ENCODE measurements at regions of chr9 and their contacts with region 1.

Region 1: GRCh38 chr9:21605489-21605931 is 123.4 kb upstream of the IFNE start:
- DNase-seq: no peak
- ATAC-seq: peak in 1 of 8 donors; percentile 35
- H3K4me3 ChIP-seq: no peak overlapping the region
- H3K27ac ChIP-seq: peak overlapping the region in 1 of 10 donors; percentile 76
- H3K4me1 ChIP-seq: no peaks in the 10 kb centered on the region
- H3K27me3 ChIP-seq: peaks cover 0 to 10% (median 4%) of the 10 kb centered on the region in 7 donors
- CTCF ChIP-seq: no peak

Region 2: DNA sequence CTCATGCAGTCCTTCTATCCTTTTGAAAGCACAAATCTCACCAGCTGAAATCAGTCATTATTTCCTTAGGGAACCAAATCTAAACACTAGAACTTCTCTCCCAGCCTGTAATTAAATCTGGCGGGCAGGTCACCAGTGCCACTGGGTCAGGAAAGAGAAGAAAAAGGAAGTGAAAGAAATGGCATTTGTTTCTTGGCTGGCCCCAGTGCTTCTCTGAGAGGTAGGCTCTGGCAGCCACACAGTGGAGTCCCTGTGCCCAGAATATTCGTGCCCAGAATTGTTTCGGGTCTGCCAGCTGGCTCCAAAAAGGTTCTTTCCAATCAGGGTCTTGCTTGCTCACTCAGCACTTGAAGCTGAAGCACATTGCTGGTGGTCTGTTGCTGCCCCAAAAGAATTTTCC is 63.0 kb after region 1 on chr9:
- intact Hi-C with region 1: loop called in 1 of 10 experiments (anchors 10 kb)
- DNase-seq: no peak
- ATAC-seq: no peak
- H3K4me3 ChIP-seq: no peak overlapping the region
- H3K27ac ChIP-seq: no peak overlapping the region
- H3K4me1 ChIP-seq: no peaks in the 10 kb centered on the region
- H3K27me3 ChIP-seq: no peaks in the 10 kb centered on the region
- CTCF ChIP-seq: no peak

Region 3: GRCh38 chr9:21933865-21934264 is 328.4 kb after region 1 on chr9:
- intact Hi-C with region 1: no loop called
- DNase-seq: no peak
- ATAC-seq: no peak
- H3K4me3 ChIP-seq: no peak overlapping the region
- H3K27ac ChIP-seq: no peak overlapping the region
- H3K4me1 ChIP-seq: no peaks in the 10 kb centered on the region
- H3K27me3 ChIP-seq: no peaks in the 10 kb centered on the region
- CTCF ChIP-seq: no peak